ENCODE measurements at regions of chr20 and their contacts with region 1.

Region 1: GRCh38 chr20:3739054-3739925 is 6.8 kb downstream of the HSPA12B start:
- DNase-seq: no peak
- H3K4me3 ChIP-seq: no peak overlapping the region
- H3K27ac ChIP-seq: no peak overlapping the region
- H3K4me1 ChIP-seq: no peaks in the 10 kb centered on the region
- H3K27me3 ChIP-seq: peaks cover 0 to 2% (median 0%) of the 10 kb centered on the region in 5 experiments

Region 2: GRCh38 chr20:3606021-3606420 is 133.3 kb before region 1 on chr20:
- CTCF ChIA-PET with region 1: no interaction called
- POLR2A ChIA-PET with region 1: no interaction called
- DNase-seq: peak in 2 of 3 donors; percentile 9 to 33
- H3K4me3 ChIP-seq: no peak overlapping the region
- H3K27ac ChIP-seq: no peak overlapping the region
- H3K4me1 ChIP-seq: peaks cover 0 to 4% (median 3%) of the 10 kb centered on the region in 4 experiments
- H3K27me3 ChIP-seq: no peaks in the 10 kb centered on the region

Region 3: GRCh38 chr20:3632311-3633004 is 106.8 kb before region 1 on chr20:
- CTCF ChIA-PET with region 1: no interaction called
- POLR2A ChIA-PET with region 1: no interaction called
- DNase-seq: peak in 1 of 3 donors; percentile 1
- H3K4me3 ChIP-seq: no peak overlapping the region
- H3K27ac ChIP-seq: no peak overlapping the region
- H3K4me1 ChIP-seq: no peaks in the 10 kb centered on the region
- H3K27me3 ChIP-seq: no peaks in the 10 kb centered on the region

Region 4: DNA sequence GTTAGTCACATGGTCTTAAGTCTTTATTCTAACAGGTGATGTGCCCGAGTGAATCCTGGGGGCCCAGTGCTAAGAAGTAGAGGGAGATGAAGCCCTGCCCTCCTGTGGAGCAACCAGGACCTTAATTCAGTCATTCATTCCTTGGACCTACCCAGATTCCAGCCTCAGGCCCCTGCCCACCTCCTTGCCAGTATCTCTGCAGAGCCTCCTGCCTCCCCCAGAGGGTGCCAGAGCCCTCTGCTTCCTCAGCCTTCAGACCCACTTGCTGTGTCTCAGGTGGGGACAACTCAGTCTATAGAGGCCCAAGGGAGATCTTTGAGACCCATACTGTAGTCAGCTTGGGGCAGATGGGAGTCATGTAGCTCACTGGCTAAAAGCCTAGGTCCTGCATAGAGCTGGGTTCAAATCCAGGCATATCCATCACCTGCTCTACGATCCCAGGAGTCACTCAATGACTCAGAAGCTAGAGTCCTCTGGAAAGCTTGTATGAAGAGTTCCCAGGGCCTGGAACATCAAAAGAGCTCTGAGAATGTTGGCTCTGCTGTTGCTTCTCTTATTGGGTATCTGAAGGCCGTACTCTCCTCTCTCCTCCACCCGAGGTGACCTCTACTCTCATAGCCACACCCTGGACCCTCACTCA is 23.0 kb before region 1 on chr20:
- CTCF ChIA-PET with region 1: interaction called, 11 read pairs
- POLR2A ChIA-PET with region 1: interaction called, 3 read pairs
- DNase-seq: peak; percentile 64 to 77 (median 75)
- H3K4me3 ChIP-seq: no peak overlapping the region
- H3K27ac ChIP-seq: no peak overlapping the region
- H3K4me1 ChIP-seq: peaks cover 0 to 12% (median 3%) of the 10 kb centered on the region in 4 experiments
- H3K27me3 ChIP-seq: peaks cover 0 to 7% (median 0%) of the 10 kb centered on the region in 5 experiments

Region 5: GRCh38 chr20:3753098-3753980 is 14.0 kb after region 1 on chr20:
- CTCF ChIA-PET with region 1: interaction called, 16 read pairs
- POLR2A ChIA-PET with region 1: no interaction called
- DNase-seq: peak; percentile 75 to 87 (median 81)
- H3K4me3 ChIP-seq: no peak overlapping the region
- H3K27ac ChIP-seq: no peak overlapping the region
- H3K4me1 ChIP-seq: peaks cover 0 to 21% (median 8%) of the 10 kb centered on the region in 4 experiments
- H3K27me3 ChIP-seq: peaks cover 0 to 2% (median 0%) of the 10 kb centered on the region in 5 experiments